Activated CD8-positive, alpha-beta T cell treated with anti-CD3 and anti-CD28 coated beads for 36 hours (primary cell): ENCODE measurements at regions of chr14 and their contacts with region 1.

Region 1: DNA sequence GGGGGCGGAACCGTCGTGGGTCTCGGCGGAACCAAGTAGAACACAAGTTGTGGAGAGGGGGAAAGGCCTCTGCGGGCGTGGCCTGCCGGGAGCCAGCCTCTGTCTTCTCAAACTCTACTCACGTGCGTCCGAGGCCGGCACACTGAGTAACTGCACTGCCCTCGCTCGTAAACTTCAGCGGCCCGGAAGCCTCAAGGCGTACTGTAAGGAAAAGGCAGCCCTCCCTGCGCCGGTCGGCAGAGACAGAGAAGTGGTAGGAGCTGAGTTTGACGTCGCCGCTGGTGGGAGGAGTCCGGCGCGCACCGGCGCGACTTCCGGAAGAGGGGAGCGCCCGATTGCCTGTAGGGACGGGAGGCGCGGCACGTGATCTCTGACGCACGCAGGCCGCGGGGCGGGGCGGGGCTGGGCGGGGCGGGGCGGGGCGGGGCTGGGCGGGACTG is at the start of gene FBXO33:
- DNase-seq: peak; percentile 96
- ATAC-seq: peak; percentile 85
- H3K4me3 Mint-ChIP-seq: peak within 1 kb of the TSS; percentile 98
- H3K27ac Mint-ChIP-seq: peak within 1 kb of the TSS; percentile 100
- H3K4me1 Mint-ChIP-seq: peaks cover 28% of the 10 kb centered on the region
- H3K27me3 Mint-ChIP-seq: no peaks in the 10 kb centered on the region
- CTCF ChIP-seq: no peak
- total RNA-seq, gene FBXO33: 16.8 to 18.6 TPM

Region 2: GRCh38 chr14:39114073-39114838 is 317.9 kb before region 1 on chr14 and contains the start of gene GEMIN2:
- CTCF ChIA-PET with region 1: interaction called, 4 read pairs
- POLR2A ChIA-PET with region 1: interaction called, 6 read pairs
- intact Hi-C with region 1: loop called (anchors 5 kb)
- DNase-seq: peak; percentile 97
- ATAC-seq: peak; percentile 99
- H3K4me3 Mint-ChIP-seq: peak within 1 kb of the TSS; percentile 96
- H3K27ac Mint-ChIP-seq: peak within 1 kb of the TSS; percentile 95
- H3K4me1 Mint-ChIP-seq: peaks cover 21% of the 10 kb centered on the region
- H3K27me3 Mint-ChIP-seq: no peaks in the 10 kb centered on the region
- CTCF ChIP-seq: no peak
- total RNA-seq, gene GEMIN2: 21.6 to 25.3 TPM

Region 3: GRCh38 chr14:39174560-39175444 is 257.4 kb before region 1 on chr14 and contains the start of gene PNN:
- CTCF ChIA-PET with region 1: no interaction called
- POLR2A ChIA-PET with region 1: interaction called, 10 read pairs
- intact Hi-C with region 1: loop called (anchors 5 kb)
- DNase-seq: peak; percentile 97
- ATAC-seq: peak; percentile 88
- H3K4me3 Mint-ChIP-seq: peak within 1 kb of the TSS; percentile 93
- H3K27ac Mint-ChIP-seq: peak within 1 kb of the TSS; percentile 97
- H3K4me1 Mint-ChIP-seq: peaks cover 34% of the 10 kb centered on the region
- H3K27me3 Mint-ChIP-seq: no peaks in the 10 kb centered on the region
- CTCF ChIP-seq: no peak
- total RNA-seq, gene PNN: 106 to 107 TPM

Region 4: GRCh38 chr14:39266871-39267591 is 165.2 kb before region 1 on chr14:
- CTCF ChIA-PET with region 1: interaction called, 6 read pairs
- POLR2A ChIA-PET with region 1: interaction called, 5 read pairs
- intact Hi-C with region 1: loop called (anchors 5 kb)
- DNase-seq: peak; percentile 75
- ATAC-seq: peak; percentile 75
- H3K4me3 Mint-ChIP-seq: peak overlapping the region; percentile 77
- H3K27ac Mint-ChIP-seq: peak overlapping the region; percentile 99
- H3K4me1 Mint-ChIP-seq: peaks cover 47% of the 10 kb centered on the region
- H3K27me3 Mint-ChIP-seq: no peaks in the 10 kb centered on the region
- CTCF ChIP-seq: no peak

Region 5: GRCh38 chr14:39291701-39292100 is 140.5 kb before region 1 on chr14:
- CTCF ChIA-PET with region 1: no interaction called
- POLR2A ChIA-PET with region 1: no interaction called
- intact Hi-C with region 1: no loop called
- DNase-seq: no peak
- ATAC-seq: no peak
- H3K4me3 Mint-ChIP-seq: no peak overlapping the region
- H3K27ac Mint-ChIP-seq: no peak overlapping the region
- H3K4me1 Mint-ChIP-seq: peaks cover 6% of the 10 kb centered on the region
- H3K27me3 Mint-ChIP-seq: no peaks in the 10 kb centered on the region
- CTCF ChIP-seq: no peak

Region 6: GRCh38 chr14:39383026-39383660 is 49.1 kb before region 1 on chr14:
- CTCF ChIA-PET with region 1: interaction called, 11 read pairs
- POLR2A ChIA-PET with region 1: no interaction called
- intact Hi-C with region 1: no loop called
- DNase-seq: no peak
- ATAC-seq: peak; percentile 83
- H3K4me3 Mint-ChIP-seq: no peak overlapping the region
- H3K27ac Mint-ChIP-seq: no peak overlapping the region
- H3K4me1 Mint-ChIP-seq: peaks cover 20% of the 10 kb centered on the region
- H3K27me3 Mint-ChIP-seq: no peaks in the 10 kb centered on the region
- CTCF ChIP-seq: no peak

Region 7: DNA sequence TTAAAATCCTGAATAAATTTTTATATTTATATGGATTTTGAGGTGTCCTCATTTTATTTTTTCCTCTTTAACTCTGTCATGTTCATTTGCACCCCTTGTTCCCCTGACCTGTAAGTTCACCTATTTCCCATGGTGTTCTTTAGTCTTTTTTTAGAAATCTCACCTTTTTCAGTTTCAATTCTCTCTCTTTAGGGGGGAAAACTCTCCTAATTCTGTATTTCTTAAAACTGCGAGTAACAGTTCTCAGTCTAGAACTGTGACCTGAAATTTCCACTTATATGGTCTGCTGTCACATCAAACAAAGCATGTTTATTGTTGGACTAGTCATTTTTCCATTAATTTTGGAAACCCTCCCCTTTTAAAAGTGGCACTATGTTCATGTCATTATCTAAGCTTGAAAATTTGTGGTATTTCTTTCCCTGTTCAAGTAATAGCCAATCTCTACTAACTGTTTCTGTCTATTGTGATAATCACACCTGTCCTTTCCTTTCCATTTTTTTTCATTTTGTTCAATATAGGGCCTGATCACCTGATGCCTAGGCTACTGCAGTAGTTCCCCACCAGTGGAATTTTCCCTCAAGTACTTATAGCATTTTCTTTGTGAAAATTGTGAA is 14.0 kb after region 1 on chr14:
- CTCF ChIA-PET with region 1: interaction called, 12 read pairs
- POLR2A ChIA-PET with region 1: interaction called, 11 read pairs
- intact Hi-C with region 1: no loop called
- DNase-seq: no peak
- ATAC-seq: peak; percentile 54
- H3K4me3 Mint-ChIP-seq: peak overlapping the region; percentile 37
- H3K27ac Mint-ChIP-seq: peak overlapping the region; percentile 94
- H3K4me1 Mint-ChIP-seq: peaks cover 47% of the 10 kb centered on the region
- H3K27me3 Mint-ChIP-seq: no peaks in the 10 kb centered on the region
- CTCF ChIP-seq: no peak